Activated T-helper 2 cell treated with anti-CD3 and anti-CD28 coated beads, Interferon-gamma antibody, Interleukin-2, Interleukin-4, amounts not matched to agents 10 μg/mL and 5 μg/mL and 100 μg/mL, durations not matched to agents 14 hours and 24 hours and 36 hours (primary cell): ENCODE measurements at regions of chr17 and their contacts with region 1.

Region 1: DNA sequence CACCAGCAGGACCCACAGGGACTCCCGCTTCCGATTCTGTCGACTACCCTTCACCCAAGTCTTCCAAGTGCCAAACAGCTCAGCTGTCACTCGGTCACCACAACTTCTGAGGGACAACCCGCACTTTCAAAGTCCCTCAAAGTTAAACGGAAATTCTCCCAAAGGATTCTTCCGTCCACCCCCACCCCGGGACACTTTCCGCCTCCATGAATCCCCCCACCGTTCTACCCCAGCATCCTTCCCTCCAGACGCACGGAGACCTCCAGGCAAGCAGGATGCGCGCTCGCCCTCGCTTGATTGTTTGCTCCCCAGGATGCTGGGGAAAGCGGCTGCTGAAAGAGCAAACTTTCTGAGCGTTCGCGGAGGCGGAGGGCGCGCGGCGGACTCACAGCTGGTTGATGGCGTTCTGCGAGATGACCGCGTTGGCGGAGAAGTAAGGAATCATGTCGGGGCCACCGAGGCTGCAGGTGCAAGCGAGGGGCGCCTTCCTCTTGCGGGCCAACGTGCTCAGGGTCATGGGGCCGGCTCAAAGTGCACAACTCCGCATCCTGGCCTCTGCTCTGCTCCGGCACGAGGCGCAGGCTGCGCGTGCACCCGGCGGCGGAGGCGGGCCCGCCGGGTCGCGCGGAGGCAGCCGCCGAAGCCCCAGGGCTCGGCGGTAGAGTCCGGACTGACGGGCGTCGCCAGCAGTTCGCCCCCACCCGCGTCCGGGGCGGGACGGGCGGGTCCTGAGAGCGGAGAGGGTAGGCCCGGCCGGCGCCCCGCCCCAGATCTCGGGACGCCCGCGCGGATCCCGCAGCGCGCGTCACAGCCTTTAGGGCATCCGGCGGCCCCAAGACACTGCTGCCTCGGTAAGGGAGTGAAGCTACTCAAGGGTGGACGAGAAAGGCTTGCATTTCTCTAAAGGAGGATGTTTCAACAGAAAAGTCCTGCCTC is 138.3 kb upstream of the CORO6 start:
- DNase-seq: peak; percentile 90
- H3K4me3 Mint-ChIP-seq: peak overlapping the region; percentile 97
- H3K27ac Mint-ChIP-seq: peak overlapping the region; percentile 96
- H3K4me1 Mint-ChIP-seq: peaks cover 27% of the 10 kb centered on the region
- H3K27me3 Mint-ChIP-seq: no peaks in the 10 kb centered on the region

Region 2: GRCh38 chr17:29640413-29640812 is 120.6 kb before region 1 on chr17:
- intact Hi-C with region 1: loop called (anchors 2 kb)
- DNase-seq: no peak
- H3K4me3 Mint-ChIP-seq: no peak overlapping the region
- H3K27ac Mint-ChIP-seq: peak overlapping the region; percentile 67
- H3K4me1 Mint-ChIP-seq: peaks cover 21% of the 10 kb centered on the region
- H3K27me3 Mint-ChIP-seq: no peaks in the 10 kb centered on the region

Region 3: GRCh38 chr17:29709861-29710519 is 51.0 kb before region 1 on chr17:
- intact Hi-C with region 1: loop called (anchors 2 kb)
- DNase-seq: no peak
- H3K4me3 Mint-ChIP-seq: no peak overlapping the region
- H3K27ac Mint-ChIP-seq: no peak overlapping the region
- H3K4me1 Mint-ChIP-seq: peaks cover 44% of the 10 kb centered on the region
- H3K27me3 Mint-ChIP-seq: no peaks in the 10 kb centered on the region

Region 4: GRCh38 chr17:29722411-29723198 is 38.4 kb before region 1 on chr17:
- intact Hi-C with region 1: loop called (anchors 2 kb)
- DNase-seq: no peak
- H3K4me3 Mint-ChIP-seq: peak overlapping the region; percentile 35
- H3K27ac Mint-ChIP-seq: peak overlapping the region; percentile 57
- H3K4me1 Mint-ChIP-seq: peaks cover 49% of the 10 kb centered on the region
- H3K27me3 Mint-ChIP-seq: no peaks in the 10 kb centered on the region

Region 5: GRCh38 chr17:29807520-29808351 is 46.7 kb after region 1 on chr17:
- intact Hi-C with region 1: no loop called
- DNase-seq: peak; percentile 46
- H3K4me3 Mint-ChIP-seq: no peak overlapping the region
- H3K27ac Mint-ChIP-seq: no peak overlapping the region
- H3K4me1 Mint-ChIP-seq: peaks cover 14% of the 10 kb centered on the region
- H3K27me3 Mint-ChIP-seq: no peaks in the 10 kb centered on the region